CD8-positive, alpha-beta T cell (primary cell): ENCODE measurements at regions of chr11 and their contacts with region 1.

Region 1: DNA sequence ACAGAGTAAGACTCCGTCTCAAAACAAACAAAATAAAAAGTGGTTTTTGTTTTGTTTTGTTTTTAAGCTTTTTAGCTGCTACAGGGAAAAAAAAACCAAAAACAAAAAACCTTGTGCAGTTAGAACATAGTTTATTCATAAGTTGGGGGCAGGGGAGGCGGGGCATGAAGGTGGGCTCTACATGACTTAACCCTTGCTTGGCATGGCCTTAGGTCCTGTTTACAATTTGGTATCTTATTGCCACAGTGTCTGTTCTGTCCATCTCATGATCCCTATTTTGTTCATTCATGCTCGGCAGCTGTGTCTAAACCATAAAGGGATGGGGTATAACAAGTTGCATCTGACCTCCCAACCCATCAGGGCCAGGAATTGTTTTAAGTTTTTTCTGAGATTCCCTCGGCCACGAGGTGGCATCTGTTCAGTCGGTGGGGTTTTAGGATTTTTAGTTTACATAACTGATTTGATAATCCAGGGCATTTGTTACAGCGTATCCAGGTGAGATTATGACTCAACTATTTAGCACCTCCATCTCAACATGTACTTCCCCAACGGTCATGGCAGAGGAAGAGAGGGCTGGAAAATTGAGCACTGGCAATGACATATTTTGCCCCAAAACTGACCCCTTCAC is 6.9 kb downstream of the AP5B1 start:
- DNase-seq: no peak
- ATAC-seq: no peak
- H3K4me3 ChIP-seq: no peak overlapping the region
- H3K4me3 Mint-ChIP-seq: no peak overlapping the region
- H3K27ac ChIP-seq: no peak overlapping the region
- H3K27ac Mint-ChIP-seq: no peak overlapping the region
- H3K4me1 ChIP-seq: peaks cover 6% of the 10 kb centered on the region
- H3K4me1 Mint-ChIP-seq: peaks cover 7% of the 10 kb centered on the region
- H3K27me3 ChIP-seq: no peaks in the 10 kb centered on the region
- H3K27me3 Mint-ChIP-seq: no peaks in the 10 kb centered on the region
- CTCF ChIP-seq: no peak

Region 2: GRCh38 chr11:65625628-65626342 is 148.1 kb before region 1 on chr11:
- CTCF ChIA-PET with region 1: interaction called, 19 read pairs
- POLR2A ChIA-PET with region 1: no interaction called
- intact Hi-C with region 1: loop called in 1 of 2 experiments (anchors 2 kb)
- DNase-seq: peak in 8 of 9 experiments; percentile 24 to 83 (median 63)
- ATAC-seq: peak; percentile 88
- H3K4me3 ChIP-seq: no peak overlapping the region
- H3K4me3 Mint-ChIP-seq: no peak overlapping the region
- H3K27ac ChIP-seq: no peak overlapping the region
- H3K27ac Mint-ChIP-seq: peak overlapping the region; percentile 55
- H3K4me1 ChIP-seq: peaks cover 5% of the 10 kb centered on the region
- H3K4me1 Mint-ChIP-seq: peaks cover 9% of the 10 kb centered on the region
- H3K27me3 ChIP-seq: no peaks in the 10 kb centered on the region
- H3K27me3 Mint-ChIP-seq: no peaks in the 10 kb centered on the region
- CTCF ChIP-seq: peak; percentile 66

Region 3: GRCh38 chr11:65739022-65739421 is 34.9 kb before region 1 on chr11:
- CTCF ChIA-PET with region 1: no interaction called
- POLR2A ChIA-PET with region 1: no interaction called
- intact Hi-C with region 1: loop called in 1 of 2 experiments (anchors 5 kb)
- DNase-seq: no peak
- ATAC-seq: no peak
- H3K4me3 ChIP-seq: no peak overlapping the region
- H3K4me3 Mint-ChIP-seq: no peak overlapping the region
- H3K27ac ChIP-seq: no peak overlapping the region
- H3K27ac Mint-ChIP-seq: no peak overlapping the region
- H3K4me1 ChIP-seq: no peaks in the 10 kb centered on the region
- H3K4me1 Mint-ChIP-seq: no peaks in the 10 kb centered on the region
- H3K27me3 ChIP-seq: no peaks in the 10 kb centered on the region
- H3K27me3 Mint-ChIP-seq: peaks cover 16% of the 10 kb centered on the region
- CTCF ChIP-seq: no peak

Region 4: DNA sequence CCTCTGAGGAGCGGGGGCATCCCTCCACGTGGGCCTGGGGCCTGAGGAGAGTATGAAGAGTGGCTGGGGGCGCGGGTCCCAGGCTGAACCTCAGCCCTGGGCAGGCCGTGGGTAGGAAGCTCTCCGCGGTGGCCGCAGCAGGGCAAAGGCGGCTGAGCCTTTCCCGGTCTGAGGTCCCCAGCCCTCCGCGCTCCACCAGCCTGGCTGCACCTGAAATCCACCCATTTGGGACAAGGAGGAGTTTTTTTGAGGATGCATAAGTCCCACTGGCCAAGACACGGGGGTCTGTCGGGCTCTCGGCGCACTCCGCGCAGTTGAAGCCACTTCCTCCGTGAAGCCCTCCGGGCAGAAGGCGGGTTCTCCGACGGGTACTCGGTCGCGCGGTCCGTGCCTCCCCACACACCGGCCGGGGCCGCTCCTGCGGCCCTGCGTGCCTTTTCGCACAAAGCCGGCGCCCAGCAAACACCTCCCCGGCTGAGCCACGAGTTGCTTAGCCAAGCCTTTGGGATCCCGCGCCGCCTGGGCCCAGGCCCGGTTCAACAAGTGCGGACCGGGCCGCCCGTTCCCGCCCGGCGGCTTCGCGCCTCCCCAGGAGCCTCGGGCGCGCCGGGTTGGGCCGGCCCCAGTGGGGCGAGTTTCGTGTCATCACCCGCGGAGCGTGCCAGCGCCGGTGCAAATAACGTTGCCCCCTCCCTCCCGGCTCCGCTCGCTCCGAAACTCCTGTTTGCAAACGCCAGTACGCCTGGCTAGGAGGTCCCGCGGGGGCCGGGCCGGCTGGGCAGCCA is 12.3 kb after region 1 on chr11:
- CTCF ChIA-PET with region 1: interaction called, 44 read pairs
- POLR2A ChIA-PET with region 1: interaction called, 3 read pairs
- intact Hi-C with region 1: no loop called
- DNase-seq: peak in 3 of 9 experiments; percentile 23 to 44 (median 41)
- ATAC-seq: peak; percentile 10
- H3K4me3 ChIP-seq: peak overlapping the region in 1 of 2 experiments; percentile 35
- H3K4me3 Mint-ChIP-seq: peak overlapping the region; percentile 66
- H3K27ac ChIP-seq: no peak overlapping the region
- H3K27ac Mint-ChIP-seq: no peak overlapping the region
- H3K4me1 ChIP-seq: peaks cover 38% of the 10 kb centered on the region
- H3K4me1 Mint-ChIP-seq: peaks cover 18% of the 10 kb centered on the region
- H3K27me3 ChIP-seq: peaks cover 29% of the 10 kb centered on the region in 2 experiments
- H3K27me3 Mint-ChIP-seq: peaks cover 33% of the 10 kb centered on the region
- CTCF ChIP-seq: no peak